ENCODE measurements at regions of chr1 and their contacts with region 1.

Region 1: DNA sequence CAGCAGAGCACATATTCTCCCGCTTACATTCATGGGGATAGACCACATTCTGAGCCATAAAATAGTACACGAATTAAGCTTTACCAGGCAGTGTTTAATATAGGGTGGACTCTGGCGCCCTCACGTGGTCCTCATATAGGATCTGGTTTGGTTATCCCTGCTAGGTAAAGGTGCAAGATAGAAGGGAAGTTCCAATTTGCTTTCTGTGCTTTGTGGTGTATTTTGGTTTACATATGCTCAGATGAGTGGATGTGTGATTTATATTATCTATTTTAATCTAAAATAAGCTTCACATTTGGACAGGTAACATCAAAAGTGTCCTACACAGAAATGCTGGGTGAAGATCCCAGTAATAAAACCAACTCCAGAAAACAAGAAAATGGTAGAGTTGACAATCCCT is 3.6 kb downstream of the CR1 start:
- DNase-seq: peak; percentile 81
- ATAC-seq: peak; percentile 74
- H3K4me3 Mint-ChIP-seq: no peak overlapping the region
- H3K27ac Mint-ChIP-seq: no peak overlapping the region
- H3K4me1 Mint-ChIP-seq: peaks cover 14% of the 10 kb centered on the region
- H3K27me3 Mint-ChIP-seq: peaks cover 34% of the 10 kb centered on the region

Region 2: GRCh38 chr1:207077470-207078377 is 421.8 kb before region 1 on chr1:
- CTCF ChIA-PET with region 1: interaction called, 31 read pairs
- POLR2A ChIA-PET with region 1: no interaction called
- DNase-seq: peak; percentile 84
- ATAC-seq: peak; percentile 85
- H3K4me3 Mint-ChIP-seq: no peak overlapping the region
- H3K27ac Mint-ChIP-seq: no peak overlapping the region
- H3K4me1 Mint-ChIP-seq: peaks cover 12% of the 10 kb centered on the region
- H3K27me3 Mint-ChIP-seq: peaks cover 8% of the 10 kb centered on the region

Region 3: DNA sequence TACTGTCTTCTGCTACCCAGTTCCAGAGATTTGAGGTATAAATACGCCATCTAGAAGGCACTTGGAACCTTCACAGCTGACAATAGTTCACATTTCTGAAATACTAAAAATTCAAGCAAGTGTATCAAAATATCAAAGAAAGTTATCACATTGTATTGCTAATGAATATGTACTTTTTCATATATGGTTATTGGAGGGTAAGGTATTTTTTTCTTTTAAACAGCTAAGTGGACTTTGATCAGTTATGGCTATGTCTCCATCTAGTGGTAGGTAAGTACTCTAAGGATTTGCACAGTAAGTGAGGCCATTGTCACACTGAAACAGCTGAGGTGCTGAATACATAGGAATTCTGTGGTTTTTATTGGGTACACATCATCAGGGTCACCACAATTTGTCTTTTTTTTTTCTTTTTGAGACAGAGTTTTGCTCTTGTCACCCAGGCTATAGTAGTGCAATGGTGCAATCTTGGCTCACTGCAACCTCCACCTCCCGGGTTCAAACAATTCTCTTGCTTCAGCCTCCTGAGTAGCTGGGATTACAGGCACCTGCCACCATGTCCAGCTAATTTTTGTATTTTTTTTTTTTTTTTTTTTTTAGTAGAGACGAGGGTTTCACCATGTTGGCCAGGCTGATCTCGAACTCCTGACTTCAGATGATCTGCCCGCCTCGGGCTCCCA is 94.6 kb before region 1 on chr1:
- CTCF ChIA-PET with region 1: interaction called, 25 read pairs
- POLR2A ChIA-PET with region 1: no interaction called
- DNase-seq: no peak
- ATAC-seq: peak; percentile 86
- H3K4me3 Mint-ChIP-seq: no peak overlapping the region
- H3K27ac Mint-ChIP-seq: no peak overlapping the region
- H3K4me1 Mint-ChIP-seq: peaks cover 11% of the 10 kb centered on the region
- H3K27me3 Mint-ChIP-seq: peaks cover 3% of the 10 kb centered on the region

Region 4: GRCh38 chr1:207412845-207413244 is 86.7 kb before region 1 on chr1:
- CTCF ChIA-PET with region 1: interaction called, 25 read pairs
- POLR2A ChIA-PET with region 1: no interaction called
- DNase-seq: no peak
- ATAC-seq: no peak
- H3K4me3 Mint-ChIP-seq: no peak overlapping the region
- H3K27ac Mint-ChIP-seq: peak overlapping the region; percentile 1
- H3K4me1 Mint-ChIP-seq: peaks cover 19% of the 10 kb centered on the region
- H3K27me3 Mint-ChIP-seq: no peaks in the 10 kb centered on the region

Region 5: DNA sequence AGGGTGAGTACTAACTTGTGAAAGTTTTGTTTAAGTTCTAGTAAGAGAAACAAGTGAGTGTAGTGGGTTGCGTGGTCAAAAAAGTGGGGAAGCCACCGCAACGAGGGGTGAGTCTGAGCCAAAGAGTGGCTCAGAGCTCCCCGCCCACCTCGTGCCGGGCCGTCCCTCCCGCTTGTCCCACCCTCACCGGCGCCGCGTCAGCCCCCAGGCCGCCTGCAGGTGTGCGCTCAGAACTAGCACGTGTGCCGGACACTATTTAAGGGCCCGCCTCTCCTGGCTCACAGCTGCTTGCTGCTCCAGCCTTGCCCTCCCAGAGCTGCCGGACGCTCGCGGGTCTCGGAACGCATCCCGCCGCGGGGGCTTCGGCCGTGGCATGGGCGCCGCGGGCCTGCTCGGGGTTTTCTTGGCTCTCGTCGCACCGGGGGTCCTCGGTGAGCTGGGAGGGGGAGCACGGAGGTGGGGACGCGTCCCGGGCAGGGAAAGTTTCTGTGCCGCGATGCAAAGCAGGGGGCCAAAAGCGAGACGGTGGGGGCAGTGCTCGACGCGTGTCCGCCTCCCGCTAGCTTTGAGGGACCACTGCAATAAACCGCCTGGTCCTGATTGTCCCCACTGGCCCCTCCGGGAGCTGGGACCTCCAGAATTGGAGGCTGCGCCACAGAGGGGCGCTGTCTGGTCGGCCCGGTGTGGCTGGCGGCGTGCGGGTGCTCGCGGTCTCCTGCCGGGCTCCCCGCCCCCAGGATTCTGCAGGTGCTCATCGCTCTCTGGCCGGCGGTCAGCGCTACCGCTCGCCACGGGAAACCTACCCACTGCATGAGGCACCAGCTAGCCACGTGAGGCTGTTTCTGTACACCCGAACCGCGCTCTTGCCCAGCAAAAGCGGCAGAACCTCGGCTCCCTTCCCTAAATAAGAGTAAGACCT is 45.3 kb before region 1 on chr1 and contains the start of gene CR2:
- CTCF ChIA-PET with region 1: interaction called, 23 read pairs
- POLR2A ChIA-PET with region 1: no interaction called
- DNase-seq: peak; percentile 50
- ATAC-seq: peak; percentile 77
- H3K4me3 Mint-ChIP-seq: peak within 1 kb of the TSS; percentile 55
- H3K27ac Mint-ChIP-seq: no peak within 1 kb of the TSS
- H3K4me1 Mint-ChIP-seq: peaks cover 17% of the 10 kb centered on the region
- H3K27me3 Mint-ChIP-seq: peaks cover 48% of the 10 kb centered on the region
- total RNA-seq, gene CR2: not detected

Region 6: GRCh38 chr1:207779008-207779407 is 279.4 kb after region 1 on chr1:
- CTCF ChIA-PET with region 1: no interaction called
- POLR2A ChIA-PET with region 1: no interaction called
- DNase-seq: no peak
- ATAC-seq: no peak
- H3K4me3 Mint-ChIP-seq: no peak overlapping the region
- H3K27ac Mint-ChIP-seq: no peak overlapping the region
- H3K4me1 Mint-ChIP-seq: peaks cover 10% of the 10 kb centered on the region
- H3K27me3 Mint-ChIP-seq: no peaks in the 10 kb centered on the region

Measured in activated CD8-positive, alpha-beta T cell treated with anti-CD3 and anti-CD28 coated beads, Interleukin-2, amount 10 ng/mL, durations not matched to agents 7 days and 5 days (primary cell).